Keratinocyte (primary cell): ENCODE measurements at regions of chr7 and their contacts with region 1.

Region 1: GRCh38 chr7:33807779-33808482 is 97.4 kb upstream of the BMPER start:
- DNase-seq: peak; percentile 99
- H3K4me3 ChIP-seq: peak overlapping the region in 1 of 3 experiments; percentile 25
- H3K27ac ChIP-seq: peak overlapping the region; percentile 92
- H3K4me1 ChIP-seq: peaks cover 24% of the 10 kb centered on the region
- H3K27me3 ChIP-seq: no peaks in the 10 kb centered on the region
- CTCF ChIP-seq: peak; percentile 93 to 98 (median 93)

Region 2: GRCh38 chr7:33346055-33346454 is 461.9 kb before region 1 on chr7:
- dilution Hi-C with region 1: no loop called
- DNase-seq: no peak
- H3K4me3 ChIP-seq: no peak overlapping the region
- H3K27ac ChIP-seq: no peak overlapping the region
- H3K4me1 ChIP-seq: no peaks in the 10 kb centered on the region
- H3K27me3 ChIP-seq: no peaks in the 10 kb centered on the region
- CTCF ChIP-seq: no peak

Region 3: DNA sequence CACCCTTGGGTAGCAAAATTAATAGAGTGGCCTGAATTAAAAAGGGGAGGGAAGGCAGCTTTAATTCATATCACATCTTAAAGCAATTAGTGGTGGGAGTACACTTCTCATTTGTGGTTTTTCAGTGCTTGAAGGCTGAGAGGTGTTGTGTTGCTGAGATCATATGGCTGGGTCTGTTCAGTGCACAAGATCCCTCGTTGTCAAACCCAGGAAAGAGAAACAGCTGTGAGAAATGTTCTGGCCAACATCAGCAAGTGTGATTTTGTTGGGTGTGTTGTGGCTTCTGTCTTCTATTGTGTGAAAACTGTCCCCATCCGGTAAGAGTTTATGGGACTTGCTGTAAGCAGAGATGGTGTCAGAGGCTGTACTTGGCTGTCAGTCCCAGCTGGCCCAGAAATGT is 100.5 kb before region 1 on chr7:
- dilution Hi-C with region 1: no loop called
- DNase-seq: no peak
- H3K4me3 ChIP-seq: no peak overlapping the region
- H3K27ac ChIP-seq: no peak overlapping the region
- H3K4me1 ChIP-seq: no peaks in the 10 kb centered on the region
- H3K27me3 ChIP-seq: no peaks in the 10 kb centered on the region
- CTCF ChIP-seq: no peak

Region 4: GRCh38 chr7:33904681-33905388 is 96.9 kb after region 1 on chr7:
- dilution Hi-C with region 1: loop called (anchors 5 kb)
- DNase-seq: no peak
- H3K4me3 ChIP-seq: peak overlapping the region; percentile 51 to 85 (median 79)
- H3K27ac ChIP-seq: peak overlapping the region; percentile 20
- H3K4me1 ChIP-seq: peaks cover 8% of the 10 kb centered on the region
- H3K27me3 ChIP-seq: peaks cover 4% of the 10 kb centered on the region
- CTCF ChIP-seq: peak in 1 of 3 experiments; percentile 24

Region 5: DNA sequence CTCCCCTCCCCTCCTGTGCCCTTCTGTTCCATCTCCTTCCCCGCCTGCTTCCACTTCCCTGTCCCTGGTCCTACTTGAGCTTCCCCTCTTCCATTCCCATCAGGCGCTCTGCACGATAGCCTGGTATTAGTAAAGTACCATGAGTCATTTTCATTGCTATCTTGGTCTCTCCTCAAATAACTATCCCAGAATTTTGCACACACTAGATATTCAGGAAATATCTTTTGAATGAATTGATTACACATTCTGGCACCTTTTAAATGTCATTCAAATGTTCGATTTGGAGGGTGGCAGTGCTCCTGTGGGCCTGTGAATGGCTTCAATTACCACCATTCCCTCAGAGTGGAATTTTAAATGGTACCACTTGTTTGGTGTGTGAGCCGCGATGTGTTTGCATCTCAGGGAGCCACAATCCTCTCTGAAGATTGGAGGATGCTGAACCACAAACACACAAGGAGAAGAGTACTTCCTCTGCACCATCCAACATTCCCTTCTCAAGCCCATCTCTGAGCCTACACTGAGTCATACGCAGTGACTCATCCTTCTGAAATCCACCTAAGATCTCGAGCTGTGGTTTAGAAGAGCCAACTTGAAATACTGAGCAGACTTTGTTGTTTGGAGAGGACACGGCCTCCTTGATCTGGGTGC is 179.1 kb after region 1 on chr7:
- dilution Hi-C with region 1: no loop called
- DNase-seq: peak; percentile 93
- H3K4me3 ChIP-seq: no peak overlapping the region
- H3K27ac ChIP-seq: peak overlapping the region; percentile 80
- H3K4me1 ChIP-seq: peaks cover 38% of the 10 kb centered on the region
- H3K27me3 ChIP-seq: no peaks in the 10 kb centered on the region
- CTCF ChIP-seq: no peak